ENCODE measurements at regions of chr20 and their contacts with region 1.

Region 1: DNA sequence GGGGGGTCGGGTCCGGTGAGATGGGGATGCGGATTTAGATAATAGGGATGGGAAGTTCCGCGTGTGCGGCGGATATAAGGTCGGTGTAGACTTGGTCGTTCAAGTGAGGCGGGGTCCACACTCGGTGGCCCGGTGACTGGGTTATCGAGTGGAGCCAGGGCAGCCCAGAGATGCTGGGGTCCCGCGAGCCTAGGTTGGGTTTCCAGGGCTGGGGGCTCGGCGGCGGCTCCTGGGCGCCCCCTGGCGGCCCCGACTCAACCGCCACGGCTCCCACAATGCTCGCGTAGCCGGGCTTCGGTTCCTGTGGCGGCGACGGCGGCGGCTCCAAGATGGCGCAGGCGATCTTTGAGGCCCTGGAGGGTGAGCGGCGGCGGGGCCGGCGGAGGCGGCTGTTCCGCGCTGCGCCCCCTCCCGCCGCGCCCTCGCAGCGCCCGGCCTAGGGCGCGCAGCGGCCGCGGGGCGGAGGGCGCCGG is at the start of gene ZNF341:
- DNase-seq: peak in 1 of 2 experiments; percentile 97
- H3K4me3 ChIP-seq: peak within 1 kb of the TSS; percentile 72
- H3K4me3 Mint-ChIP-seq: peak within 1 kb of the TSS; percentile 94
- H3K27ac Mint-ChIP-seq: peak within 1 kb of the TSS; percentile 88
- H3K4me1 ChIP-seq: peaks cover 23% of the 10 kb centered on the region
- H3K4me1 Mint-ChIP-seq: peaks cover 27% of the 10 kb centered on the region
- H3K27me3 ChIP-seq: no peaks in the 10 kb centered on the region
- H3K27me3 Mint-ChIP-seq: no peaks in the 10 kb centered on the region
- CTCF ChIP-seq: peak; percentile 96 to 99
- total RNA-seq, gene ZNF341: 2.9 and 4.6 TPM in 2 replicates

Region 2: GRCh38 chr20:33674295-33675135 is 57.2 kb before region 1 on chr20 and contains the start of gene NECAB3:
- CTCF ChIA-PET with region 1: interaction called, 8 read pairs
- POLR2A ChIA-PET with region 1: no interaction called
- intact Hi-C with region 1: loop called (anchors 1 kb)
- DNase-seq: peak; percentile 91 to 98
- H3K4me3 ChIP-seq: peak within 1 kb of the TSS; percentile 85
- H3K4me3 Mint-ChIP-seq: peak within 1 kb of the TSS; percentile 99
- H3K27ac Mint-ChIP-seq: peak within 1 kb of the TSS; percentile 98
- H3K4me1 ChIP-seq: peaks cover 18% of the 10 kb centered on the region
- H3K4me1 Mint-ChIP-seq: peaks cover 39% of the 10 kb centered on the region
- H3K27me3 ChIP-seq: no peaks in the 10 kb centered on the region
- H3K27me3 Mint-ChIP-seq: no peaks in the 10 kb centered on the region
- CTCF ChIP-seq: no peak
- total RNA-seq, gene NECAB3: 98.4 and 105 TPM in 2 replicates

Region 3: DNA sequence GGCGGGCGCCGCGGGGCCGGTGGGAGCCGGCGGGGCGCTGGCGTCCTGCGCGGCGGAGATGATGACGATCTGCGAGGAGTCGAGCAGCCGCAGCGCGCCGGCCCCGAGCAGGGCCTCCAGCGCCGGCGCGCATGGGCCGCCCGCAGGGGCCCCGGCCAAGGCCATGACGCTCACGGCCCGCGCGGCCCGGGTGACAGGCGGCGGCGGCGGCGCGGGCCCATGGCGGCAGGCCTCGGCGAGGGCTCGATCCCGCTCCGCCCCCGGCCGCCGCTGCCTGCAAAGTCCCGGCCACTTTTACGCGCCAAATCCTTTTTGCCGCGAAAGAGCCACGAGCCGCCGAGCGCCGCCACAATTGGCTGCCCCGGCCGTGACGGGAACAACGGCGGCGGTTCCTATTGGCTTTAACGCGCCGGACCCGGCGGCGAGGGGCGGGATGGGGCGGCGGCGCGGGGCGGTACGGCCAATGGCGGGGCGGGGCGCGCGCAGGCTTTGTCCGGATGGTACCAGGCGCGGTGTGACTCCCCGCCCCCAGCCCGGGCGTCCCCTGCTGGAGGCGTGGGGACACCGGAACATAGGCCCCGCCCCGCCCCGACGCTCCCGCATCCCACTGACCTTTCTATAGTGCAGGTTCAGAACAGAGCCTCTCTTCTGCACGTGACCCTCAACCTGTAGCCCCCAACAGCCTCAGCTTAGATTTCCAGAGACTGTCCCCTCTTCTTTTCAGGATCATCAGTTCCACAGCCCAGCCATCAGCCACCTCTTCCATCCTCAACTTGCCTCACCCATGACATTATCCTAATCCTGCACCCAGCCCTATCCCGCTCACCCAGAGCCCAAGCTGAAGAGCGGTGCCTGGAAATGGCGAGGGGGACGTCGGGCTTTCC is 45.4 kb before region 1 on chr20 and contains the start of gene E2F1:
- CTCF ChIA-PET with region 1: interaction called, 6 read pairs
- POLR2A ChIA-PET with region 1: interaction called, 3 read pairs
- intact Hi-C with region 1: loop called (anchors 1 kb)
- DNase-seq: peak; percentile 99 to 100
- H3K4me3 ChIP-seq: peak within 1 kb of the TSS; percentile 80
- H3K4me3 Mint-ChIP-seq: peak within 1 kb of the TSS; percentile 68
- H3K27ac Mint-ChIP-seq: peak within 1 kb of the TSS; percentile 78
- H3K4me1 ChIP-seq: peaks cover 46% of the 10 kb centered on the region
- H3K4me1 Mint-ChIP-seq: peaks cover 59% of the 10 kb centered on the region
- H3K27me3 ChIP-seq: no peaks in the 10 kb centered on the region
- H3K27me3 Mint-ChIP-seq: no peaks in the 10 kb centered on the region
- CTCF ChIP-seq: peak; percentile 56 to 64
- total RNA-seq, gene E2F1: 67.5 and 74.7 TPM in 2 replicates

Region 4: GRCh38 chr20:33719989-33720709 is 11.6 kb before region 1 on chr20 and contains the start of gene PXMP4:
- CTCF ChIA-PET with region 1: interaction called, 39 read pairs
- POLR2A ChIA-PET with region 1: interaction called, 15 read pairs
- intact Hi-C with region 1: loop called (anchors 1 kb)
- DNase-seq: peak; percentile 99 to 100
- H3K4me3 ChIP-seq: peak within 1 kb of the TSS; percentile 65
- H3K4me3 Mint-ChIP-seq: peak within 1 kb of the TSS; percentile 71
- H3K27ac Mint-ChIP-seq: peak within 1 kb of the TSS; percentile 33
- H3K4me1 ChIP-seq: peaks cover 22% of the 10 kb centered on the region
- H3K4me1 Mint-ChIP-seq: no peaks in the 10 kb centered on the region
- H3K27me3 ChIP-seq: no peaks in the 10 kb centered on the region
- H3K27me3 Mint-ChIP-seq: no peaks in the 10 kb centered on the region
- CTCF ChIP-seq: no peak
- total RNA-seq, gene PXMP4: 37.3 and 39.5 TPM in 2 replicates

Region 5: GRCh38 chr20:33744773-33745385 is 13.2 kb after region 1 on chr20:
- CTCF ChIA-PET with region 1: no interaction called
- POLR2A ChIA-PET with region 1: no interaction called
- intact Hi-C with region 1: no loop called
- DNase-seq: no peak
- H3K4me3 ChIP-seq: no peak overlapping the region
- H3K4me3 Mint-ChIP-seq: no peak overlapping the region
- H3K27ac Mint-ChIP-seq: no peak overlapping the region
- H3K4me1 ChIP-seq: no peaks in the 10 kb centered on the region
- H3K4me1 Mint-ChIP-seq: no peaks in the 10 kb centered on the region
- H3K27me3 ChIP-seq: no peaks in the 10 kb centered on the region
- H3K27me3 Mint-ChIP-seq: no peaks in the 10 kb centered on the region
- CTCF ChIP-seq: no peak

Region 6: DNA sequence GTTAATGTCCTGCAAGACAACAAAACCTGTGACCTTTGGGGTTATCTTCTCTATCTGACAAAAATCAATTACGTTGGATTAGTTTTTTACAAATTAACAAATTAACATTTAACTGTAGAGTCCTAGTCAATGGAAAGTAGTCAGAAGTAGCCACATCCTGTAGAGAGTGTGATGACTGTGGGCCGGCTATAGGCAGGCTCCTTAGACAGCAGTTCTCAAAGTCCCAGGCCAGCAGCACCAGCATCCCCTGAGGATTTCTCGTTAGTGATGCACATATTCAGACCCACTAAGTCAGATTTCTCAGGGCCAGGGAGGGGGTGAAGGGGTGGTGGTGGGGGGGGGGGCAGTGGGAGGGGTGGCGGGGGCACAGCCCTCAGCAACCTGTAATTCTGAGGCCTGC is 37.3 kb after region 1 on chr20:
- CTCF ChIA-PET with region 1: no interaction called
- POLR2A ChIA-PET with region 1: no interaction called
- intact Hi-C with region 1: no loop called
- DNase-seq: no peak
- H3K4me3 ChIP-seq: no peak overlapping the region
- H3K4me3 Mint-ChIP-seq: no peak overlapping the region
- H3K27ac Mint-ChIP-seq: no peak overlapping the region
- H3K4me1 ChIP-seq: no peaks in the 10 kb centered on the region
- H3K4me1 Mint-ChIP-seq: no peaks in the 10 kb centered on the region
- H3K27me3 ChIP-seq: no peaks in the 10 kb centered on the region
- H3K27me3 Mint-ChIP-seq: no peaks in the 10 kb centered on the region
- CTCF ChIP-seq: no peak

Region 7: DNA sequence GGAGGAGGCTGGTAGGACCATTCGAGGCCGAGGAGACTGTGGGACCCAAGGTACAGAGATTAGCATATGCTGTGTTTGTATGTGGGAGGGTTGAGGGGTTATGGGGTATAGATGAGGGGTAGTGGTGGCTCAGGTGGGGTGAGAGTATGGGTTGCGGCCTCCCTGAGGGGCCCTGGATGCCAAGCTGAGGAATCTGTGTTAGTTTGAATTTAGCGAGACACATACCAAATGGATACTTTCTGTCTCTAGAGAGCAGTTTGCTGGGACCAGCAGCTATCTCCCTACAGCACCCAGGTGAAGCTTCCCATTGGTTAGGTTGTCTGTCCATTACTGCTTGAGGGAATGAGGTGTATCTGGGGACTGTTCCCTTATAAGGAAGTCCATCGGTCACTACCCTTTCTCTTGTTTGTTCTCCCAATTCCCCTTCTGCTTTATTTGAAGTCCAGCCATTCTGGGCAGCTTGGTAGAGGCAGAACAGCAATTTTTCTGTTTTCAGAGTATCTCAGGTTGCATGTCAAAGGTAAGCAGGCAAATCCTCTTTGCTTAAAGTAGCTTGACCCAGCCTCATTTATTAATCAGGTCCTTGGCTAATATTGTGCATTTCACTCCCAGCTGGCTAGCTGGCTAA is 94.7 kb after region 1 on chr20:
- CTCF ChIA-PET with region 1: no interaction called
- POLR2A ChIA-PET with region 1: interaction called, 3 read pairs
- intact Hi-C with region 1: loop called (anchors 1 kb)
- DNase-seq: peak; percentile 92 to 94
- H3K4me3 ChIP-seq: peak overlapping the region; percentile 1; the same call in 1 of the 2 replicates
- H3K4me3 Mint-ChIP-seq: peak overlapping the region; percentile 43
- H3K27ac Mint-ChIP-seq: peak overlapping the region; percentile 80
- H3K4me1 ChIP-seq: peaks cover 55% of the 10 kb centered on the region
- H3K4me1 Mint-ChIP-seq: peaks cover 58% of the 10 kb centered on the region
- H3K27me3 ChIP-seq: no peaks in the 10 kb centered on the region
- H3K27me3 Mint-ChIP-seq: no peaks in the 10 kb centered on the region
- CTCF ChIP-seq: no peak

Region 8: DNA sequence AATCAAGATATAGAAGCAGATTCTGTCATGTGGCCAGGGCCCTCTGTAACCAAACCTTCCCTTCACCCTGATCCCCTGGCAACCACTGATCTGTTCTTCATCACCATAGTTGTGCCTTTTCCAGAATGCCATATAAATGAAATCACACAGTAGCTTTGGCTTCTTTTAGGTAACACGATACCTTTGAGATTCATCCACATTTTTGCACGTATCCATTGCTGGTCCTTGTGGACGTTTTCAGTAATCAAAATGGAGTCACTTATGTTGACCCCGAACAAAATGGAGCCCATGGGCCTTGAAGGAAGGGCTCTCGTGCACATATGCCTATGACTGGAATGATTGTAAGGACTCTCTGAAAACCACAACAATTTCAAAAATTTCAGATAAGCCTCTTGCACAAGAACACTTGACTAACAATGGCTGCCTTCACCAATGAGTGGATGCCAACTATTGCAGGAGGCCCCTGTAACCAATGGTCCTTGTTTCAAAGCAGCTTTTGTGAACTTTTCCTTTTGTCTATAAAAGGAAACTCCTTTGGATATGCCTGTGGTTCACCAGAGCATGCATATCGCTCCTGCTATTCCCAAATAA is 177.7 kb after region 1 on chr20:
- CTCF ChIA-PET with region 1: interaction called, 3 read pairs
- POLR2A ChIA-PET with region 1: no interaction called
- intact Hi-C with region 1: loop called (anchors 5 kb)
- DNase-seq: peak; percentile 86 to 88
- H3K4me3 ChIP-seq: no peak overlapping the region
- H3K4me3 Mint-ChIP-seq: peak overlapping the region; percentile 2
- H3K27ac Mint-ChIP-seq: peak overlapping the region; percentile 87
- H3K4me1 ChIP-seq: peaks cover 39% of the 10 kb centered on the region
- H3K4me1 Mint-ChIP-seq: peaks cover 41% of the 10 kb centered on the region
- H3K27me3 ChIP-seq: no peaks in the 10 kb centered on the region
- H3K27me3 Mint-ChIP-seq: no peaks in the 10 kb centered on the region
- CTCF ChIP-seq: no peak